ENCODE measurements at regions of chr2 and their contacts with region 1.

Region 1: GRCh38 chr2:211745295-211746097 is 793.1 kb downstream of the ERBB4 start:
- DNase-seq: peak; percentile 91
- H3K4me3 ChIP-seq: no peak overlapping the region
- H3K27ac ChIP-seq: peak overlapping the region; percentile 64
- H3K4me1 ChIP-seq: peaks cover 36% of the 10 kb centered on the region
- H3K27me3 ChIP-seq: no peaks in the 10 kb centered on the region
- CTCF ChIP-seq: peak; percentile 93

Region 2: GRCh38 chr2:211259831-211260476 is 485.5 kb before region 1 on chr2:
- CTCF ChIA-PET with region 1: interaction called, 4 read pairs
- POLR2A ChIA-PET with region 1: no interaction called
- intact Hi-C with region 1: loop called (anchors 10 kb)
- DNase-seq: peak; percentile 96
- H3K4me3 ChIP-seq: no peak overlapping the region
- H3K27ac ChIP-seq: peak overlapping the region; percentile 100
- H3K4me1 ChIP-seq: peaks cover 21% of the 10 kb centered on the region
- H3K27me3 ChIP-seq: no peaks in the 10 kb centered on the region
- CTCF ChIP-seq: no peak

Region 3: DNA sequence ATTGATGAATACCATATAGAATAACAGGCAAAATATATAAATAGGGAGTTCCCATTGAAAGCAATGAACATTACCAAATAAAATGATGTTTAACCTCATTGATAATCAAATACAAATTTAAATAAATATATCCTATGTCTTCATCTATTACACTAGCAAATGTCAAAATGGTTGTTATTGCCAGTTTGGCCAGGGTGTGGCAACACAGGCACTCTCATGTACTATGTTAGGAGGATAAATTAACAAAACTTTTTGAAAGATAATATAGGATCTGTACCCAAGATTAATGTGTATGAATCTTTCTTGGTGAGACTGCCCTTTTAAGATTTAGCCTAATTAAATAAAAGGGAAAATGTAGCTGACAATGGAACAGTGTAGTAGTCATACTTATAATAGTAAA is 133.8 kb after region 1 on chr2:
- CTCF ChIA-PET with region 1: no interaction called
- POLR2A ChIA-PET with region 1: no interaction called
- intact Hi-C with region 1: loop called (anchors 2 kb)
- DNase-seq: peak; percentile 63
- H3K4me3 ChIP-seq: no peak overlapping the region
- H3K27ac ChIP-seq: no peak overlapping the region
- H3K4me1 ChIP-seq: peaks cover 9% of the 10 kb centered on the region
- H3K27me3 ChIP-seq: no peaks in the 10 kb centered on the region
- CTCF ChIP-seq: peak; percentile 60

Region 4: DNA sequence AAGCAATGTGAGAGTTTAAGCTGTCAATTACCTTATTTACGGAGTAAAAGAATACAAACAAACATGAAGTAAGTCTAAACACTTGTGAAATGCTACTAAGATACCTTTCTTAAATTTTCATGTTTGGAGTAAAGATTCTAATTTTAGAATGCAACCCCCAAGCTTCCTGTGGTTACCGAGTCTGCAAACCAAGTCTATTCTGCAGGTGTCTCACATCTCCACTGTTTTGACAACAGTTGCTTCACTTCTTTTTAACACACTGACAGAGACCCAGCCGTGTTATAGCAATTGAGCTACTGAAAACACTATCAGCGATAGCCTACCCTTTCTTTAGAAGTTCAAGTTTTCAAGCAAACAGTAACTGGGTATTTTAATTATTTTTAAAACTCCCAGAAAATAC is 184.8 kb after region 1 on chr2:
- CTCF ChIA-PET with region 1: no interaction called
- POLR2A ChIA-PET with region 1: no interaction called
- intact Hi-C with region 1: loop called (anchors 2 kb)
- DNase-seq: peak; percentile 38
- H3K4me3 ChIP-seq: no peak overlapping the region
- H3K27ac ChIP-seq: no peak overlapping the region
- H3K4me1 ChIP-seq: peaks cover 31% of the 10 kb centered on the region
- H3K27me3 ChIP-seq: no peaks in the 10 kb centered on the region
- CTCF ChIP-seq: no peak

Region 5: GRCh38 chr2:211981451-211981850 is 236.0 kb after region 1 on chr2:
- CTCF ChIA-PET with region 1: no interaction called
- POLR2A ChIA-PET with region 1: no interaction called
- intact Hi-C with region 1: loop called (anchors 5 kb)
- DNase-seq: no peak
- H3K4me3 ChIP-seq: no peak overlapping the region
- H3K27ac ChIP-seq: no peak overlapping the region
- H3K4me1 ChIP-seq: peaks cover 4% of the 10 kb centered on the region
- H3K27me3 ChIP-seq: no peaks in the 10 kb centered on the region
- CTCF ChIP-seq: no peak

Region 6: DNA sequence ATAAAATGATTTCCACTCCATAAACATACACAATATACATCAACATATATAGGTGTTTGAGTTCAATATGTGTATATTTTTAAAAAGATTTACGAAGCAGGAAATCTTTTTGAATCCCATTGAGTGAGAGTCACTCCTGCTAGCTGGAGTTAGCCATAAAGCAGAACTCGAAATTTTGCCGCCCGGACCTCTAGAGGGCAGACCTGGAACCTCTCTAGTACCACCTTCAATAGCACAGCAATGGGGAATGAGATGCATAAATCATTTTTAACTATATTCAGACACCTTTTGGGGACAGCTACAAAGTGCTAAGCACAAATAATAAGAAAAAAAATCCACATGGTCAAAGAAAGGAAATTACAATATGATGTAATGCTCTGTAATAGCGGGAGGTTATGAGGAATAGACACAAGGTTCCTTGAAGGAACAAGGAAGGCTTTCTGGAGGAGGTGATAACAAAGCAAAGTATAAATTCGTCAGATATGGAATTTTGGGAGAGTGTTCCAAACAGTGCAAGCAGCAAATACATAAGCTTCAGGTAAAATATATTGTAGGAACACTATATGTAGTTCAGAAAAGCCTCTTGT is 259.7 kb after region 1 on chr2:
- CTCF ChIA-PET with region 1: no interaction called
- POLR2A ChIA-PET with region 1: no interaction called
- intact Hi-C with region 1: loop called (anchors 5 kb)
- DNase-seq: peak; percentile 83
- H3K4me3 ChIP-seq: no peak overlapping the region
- H3K27ac ChIP-seq: no peak overlapping the region
- H3K4me1 ChIP-seq: peaks cover 44% of the 10 kb centered on the region
- H3K27me3 ChIP-seq: no peaks in the 10 kb centered on the region
- CTCF ChIP-seq: peak; percentile 87

Region 7: DNA sequence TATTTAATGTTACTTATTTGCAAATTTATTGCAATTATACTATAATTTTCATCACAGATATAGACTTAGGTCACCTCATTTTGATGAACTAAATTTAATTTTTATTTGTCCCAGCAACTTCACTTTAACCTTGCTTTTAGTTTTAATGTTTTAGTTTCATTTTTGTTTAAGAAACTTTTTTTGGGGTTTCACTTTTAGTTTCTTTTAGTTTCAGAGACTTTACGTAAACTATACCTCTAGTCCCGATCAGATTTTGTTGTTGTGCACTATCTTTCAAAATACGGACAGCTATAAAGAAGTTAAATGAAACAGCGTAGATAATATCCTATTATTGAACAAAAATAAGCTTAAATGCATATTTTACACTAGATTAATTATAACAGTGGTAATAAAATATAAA is 332.6 kb after region 1 on chr2:
- CTCF ChIA-PET with region 1: no interaction called
- POLR2A ChIA-PET with region 1: no interaction called
- intact Hi-C with region 1: no loop called
- DNase-seq: no peak
- H3K4me3 ChIP-seq: no peak overlapping the region
- H3K27ac ChIP-seq: no peak overlapping the region
- H3K4me1 ChIP-seq: no peaks in the 10 kb centered on the region
- H3K27me3 ChIP-seq: no peaks in the 10 kb centered on the region
- CTCF ChIP-seq: no peak

Region 8: DNA sequence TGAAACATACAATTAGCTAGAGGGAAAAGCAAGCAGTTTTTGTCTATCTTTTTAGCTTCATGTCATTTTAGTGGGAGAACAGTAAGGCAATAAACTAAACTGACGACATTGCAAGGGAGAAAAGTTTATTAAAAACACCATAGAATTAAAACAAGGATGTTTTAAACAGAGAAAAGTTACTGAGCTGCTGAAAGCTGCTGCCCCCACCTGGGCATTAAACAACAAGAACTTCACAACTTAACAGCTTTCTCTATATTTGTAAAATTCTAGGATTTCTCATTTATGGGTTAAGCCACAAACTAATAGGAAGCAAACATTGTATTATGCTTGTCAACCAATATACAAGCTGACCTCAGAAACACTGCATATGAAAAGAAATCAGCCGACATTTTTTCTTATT is 504.0 kb after region 1 on chr2:
- CTCF ChIA-PET with region 1: no interaction called
- POLR2A ChIA-PET with region 1: no interaction called
- intact Hi-C with region 1: loop called (anchors 10 kb)
- DNase-seq: peak; percentile 51
- H3K4me3 ChIP-seq: no peak overlapping the region
- H3K27ac ChIP-seq: no peak overlapping the region
- H3K4me1 ChIP-seq: peaks cover 38% of the 10 kb centered on the region
- H3K27me3 ChIP-seq: no peaks in the 10 kb centered on the region
- CTCF ChIP-seq: peak; percentile 66

Region 9: DNA sequence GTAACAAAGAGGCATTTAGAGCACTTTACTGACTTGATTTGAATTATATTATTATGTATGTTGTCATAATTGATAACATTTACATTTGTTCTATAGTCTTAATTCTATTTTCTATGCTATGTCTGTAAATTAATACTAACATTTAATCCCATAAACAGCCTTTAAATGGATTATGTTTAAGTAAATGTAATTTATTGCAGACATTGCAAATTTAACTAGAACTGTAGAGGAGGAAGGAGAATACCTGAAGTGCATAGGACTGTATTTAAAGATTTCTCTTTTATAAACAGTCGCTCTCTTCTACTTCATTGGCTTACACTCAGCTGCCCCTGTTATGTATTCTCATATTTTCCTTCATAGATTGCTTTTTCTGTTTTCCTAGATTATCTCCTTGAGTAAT is 1631.1 kb after region 1 on chr2:
- CTCF ChIA-PET with region 1: no interaction called
- POLR2A ChIA-PET with region 1: no interaction called
- intact Hi-C with region 1: no loop called
- DNase-seq: no peak
- H3K4me3 ChIP-seq: no peak overlapping the region
- H3K27ac ChIP-seq: no peak overlapping the region
- H3K4me1 ChIP-seq: no peaks in the 10 kb centered on the region
- H3K27me3 ChIP-seq: no peaks in the 10 kb centered on the region
- CTCF ChIP-seq: no peak

Measured in A673 (cell line).